Body of pancreas (tissue), 4 donors: ENCODE measurements at regions of chr7 and their contacts with region 1.

Region 1: DNA sequence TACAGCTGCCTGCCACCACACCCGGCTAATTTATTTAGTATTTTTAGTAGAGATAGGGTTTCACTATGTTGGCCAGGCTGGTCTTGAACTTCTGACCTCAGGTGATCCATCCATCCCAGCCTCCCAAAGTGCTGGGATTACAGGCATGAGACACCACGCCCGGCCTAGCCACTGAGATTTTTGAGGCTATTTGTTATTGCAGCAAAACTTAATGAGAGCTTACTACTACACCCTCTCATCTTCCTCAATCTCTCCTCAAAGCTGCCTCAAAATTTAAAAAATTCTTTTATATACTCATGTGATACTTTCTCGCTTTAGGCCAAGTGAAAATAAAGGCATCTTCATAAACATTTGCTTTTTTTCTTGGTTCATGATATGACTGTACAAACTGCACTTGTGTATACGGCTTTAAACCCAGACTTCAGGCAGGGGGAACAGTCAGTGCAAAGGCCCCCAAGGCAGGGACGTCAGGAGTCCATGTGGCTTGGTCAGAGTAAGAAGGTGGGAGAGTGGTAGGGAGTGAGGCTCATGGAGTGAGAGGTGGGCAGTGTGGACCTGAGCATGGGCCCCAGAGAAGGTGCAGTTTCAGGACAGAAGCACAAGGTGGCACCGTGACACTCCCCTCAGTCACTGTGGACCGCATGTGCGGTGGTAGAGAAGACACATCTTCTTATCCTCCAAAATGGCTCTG is 55.5 kb downstream of the SYPL1 start:
- DNase-seq: peak; percentile 69 to 75 (median 74)
- ATAC-seq: peak; percentile 84
- H3K4me3 ChIP-seq: no peak overlapping the region
- H3K27ac ChIP-seq: no peak overlapping the region
- H3K4me1 ChIP-seq: peaks cover 22% of the 10 kb centered on the region
- H3K27me3 ChIP-seq: no peaks in the 10 kb centered on the region
- CTCF ChIP-seq: peak; percentile 77 to 93 (median 85)
- POLR2A ChIP-seq: no peak

Region 2: DNA sequence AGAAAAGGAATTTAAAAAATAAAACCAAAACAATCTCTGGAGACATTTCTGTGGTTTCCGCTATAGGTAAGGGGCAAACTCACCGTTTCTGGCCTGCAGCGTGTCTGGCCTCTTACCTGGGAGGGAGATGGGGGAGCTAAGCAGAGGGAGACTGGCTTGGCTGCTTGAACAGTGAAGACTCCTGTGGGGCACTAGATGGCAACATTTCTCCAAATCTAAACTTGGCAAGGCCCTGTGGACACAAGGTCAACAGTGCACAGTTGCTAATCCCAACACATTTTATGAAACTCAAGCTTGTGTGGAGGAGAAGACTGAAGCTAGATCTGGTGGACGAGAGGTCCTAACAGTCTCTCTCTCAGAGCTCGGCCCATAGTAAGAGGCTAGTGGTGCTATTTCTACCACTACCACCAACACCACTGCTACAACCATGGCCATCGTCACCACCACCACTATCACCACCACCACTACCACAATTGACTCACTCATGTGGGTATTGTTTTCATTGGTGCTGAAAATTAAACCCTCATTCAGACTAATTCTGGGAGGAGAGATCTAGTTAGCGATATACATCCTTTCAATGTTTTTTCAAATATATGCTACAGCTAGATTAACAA is 122.0 kb before region 1 on chr7:
- intact Hi-C with region 1: no loop called
- DNase-seq: peak; percentile 57 to 77 (median 66)
- ATAC-seq: peak; percentile 91
- H3K4me3 ChIP-seq: no peak overlapping the region
- H3K27ac ChIP-seq: peak overlapping the region in 3 of 4 donors; percentile 24 to 46 (median 45)
- H3K4me1 ChIP-seq: peaks cover 14% of the 10 kb centered on the region
- H3K27me3 ChIP-seq: no peaks in the 10 kb centered on the region
- CTCF ChIP-seq: peak; percentile 25 to 74 (median 65)
- POLR2A ChIP-seq: no peak

Region 3: DNA sequence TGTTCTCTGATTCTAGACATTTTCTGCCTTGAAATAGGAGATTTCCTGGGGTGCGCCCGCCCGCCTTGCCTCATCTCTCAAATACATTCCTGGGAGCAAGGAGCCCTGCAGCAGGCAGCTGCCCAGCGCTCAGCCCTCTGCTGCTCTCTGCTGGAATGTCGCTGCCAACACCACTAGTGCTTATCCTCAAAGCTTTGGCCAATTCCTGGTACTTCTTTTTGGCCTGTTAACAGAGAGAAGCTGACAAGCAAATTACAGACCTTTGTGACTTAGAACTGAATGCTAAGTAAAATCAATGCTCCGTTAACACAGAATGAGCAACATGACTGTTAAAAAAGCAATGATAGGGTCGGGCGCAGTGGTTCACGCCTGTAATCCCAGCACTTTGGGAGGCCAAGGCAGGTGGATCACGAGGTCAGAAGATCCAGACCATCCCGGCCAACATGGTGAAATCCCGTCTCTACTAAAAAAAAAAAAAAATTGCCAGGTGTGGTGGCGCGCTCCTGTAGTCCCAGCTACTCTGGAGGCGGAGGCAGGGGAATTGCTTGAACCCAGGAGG is 97.3 kb after region 1 on chr7:
- intact Hi-C with region 1: loop called (anchors 5 kb)
- DNase-seq: peak; percentile 80 to 84 (median 81)
- ATAC-seq: peak; percentile 96
- H3K4me3 ChIP-seq: no peak overlapping the region
- H3K27ac ChIP-seq: no peak overlapping the region
- H3K4me1 ChIP-seq: no peaks in the 10 kb centered on the region
- H3K27me3 ChIP-seq: no peaks in the 10 kb centered on the region
- CTCF ChIP-seq: peak; percentile 87 to 96 (median 94)
- POLR2A ChIP-seq: no peak